CD4-positive, alpha-beta memory T cell (primary cell): ENCODE measurements at regions of chr7 and their contacts with region 1.

Region 1: DNA sequence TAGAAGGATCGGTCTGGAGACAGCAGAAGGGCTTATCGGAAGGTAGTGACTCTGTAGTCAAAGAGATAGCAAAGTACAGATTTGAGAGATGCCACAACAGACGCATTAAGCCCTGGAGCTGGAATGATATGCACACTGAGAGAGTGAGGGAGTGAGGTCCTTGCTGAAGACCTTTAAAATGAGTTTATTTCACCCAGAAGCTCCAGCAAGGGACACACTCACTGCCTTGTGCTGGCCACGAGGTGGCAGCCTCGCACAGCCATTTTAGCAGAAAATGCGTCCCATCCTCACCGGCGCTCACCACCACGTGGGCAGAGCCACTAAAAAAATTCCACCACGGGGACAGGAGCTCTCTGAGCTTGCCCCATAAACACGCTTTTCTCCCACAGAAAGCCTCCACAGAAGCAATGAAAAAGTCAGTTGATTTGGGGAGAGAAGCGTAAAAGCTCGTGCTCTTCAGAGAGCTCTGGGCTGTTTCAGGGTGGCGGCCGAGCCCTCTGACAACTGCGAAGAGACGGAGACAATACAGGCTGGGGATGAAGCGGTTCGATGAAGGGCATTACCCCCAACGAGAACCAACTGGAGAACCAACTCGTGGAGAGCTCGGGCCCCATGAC is 163.0 kb upstream of the KLF14 start:
- DNase-seq: peak; percentile 71 to 80 (median 75)
- H3K4me3 ChIP-seq: no peak overlapping the region
- H3K4me3 Mint-ChIP-seq: peak overlapping the region in 7 of 8 donors; percentile 2 to 72 (median 35)
- H3K27ac ChIP-seq: peak overlapping the region; percentile 18
- H3K27ac Mint-ChIP-seq: peak overlapping the region; percentile 88 to 95 (median 94)
- H3K4me1 ChIP-seq: peaks cover 87% of the 10 kb centered on the region
- H3K4me1 Mint-ChIP-seq: peaks cover 64 to 97% (median 82%) of the 10 kb centered on the region in 4 donors
- H3K27me3 ChIP-seq: no peaks in the 10 kb centered on the region
- H3K27me3 Mint-ChIP-seq: no peaks in the 10 kb centered on the region

Region 2: GRCh38 chr7:130793855-130794618 is 103.0 kb before region 1 on chr7:
- CTCF ChIA-PET with region 1: no interaction called
- POLR2A ChIA-PET with region 1: no interaction called
- intact Hi-C with region 1: no loop called
- DNase-seq: no peak
- H3K4me3 ChIP-seq: no peak overlapping the region
- H3K4me3 Mint-ChIP-seq: no peak overlapping the region
- H3K27ac ChIP-seq: no peak overlapping the region
- H3K27ac Mint-ChIP-seq: peak overlapping the region in 1 of 7 donors; percentile 15
- H3K4me1 ChIP-seq: no peaks in the 10 kb centered on the region
- H3K4me1 Mint-ChIP-seq: no peaks in the 10 kb centered on the region
- H3K27me3 ChIP-seq: no peaks in the 10 kb centered on the region
- H3K27me3 Mint-ChIP-seq: peaks cover 4 to 8% of the 10 kb centered on the region in 2 donors

Region 3: DNA sequence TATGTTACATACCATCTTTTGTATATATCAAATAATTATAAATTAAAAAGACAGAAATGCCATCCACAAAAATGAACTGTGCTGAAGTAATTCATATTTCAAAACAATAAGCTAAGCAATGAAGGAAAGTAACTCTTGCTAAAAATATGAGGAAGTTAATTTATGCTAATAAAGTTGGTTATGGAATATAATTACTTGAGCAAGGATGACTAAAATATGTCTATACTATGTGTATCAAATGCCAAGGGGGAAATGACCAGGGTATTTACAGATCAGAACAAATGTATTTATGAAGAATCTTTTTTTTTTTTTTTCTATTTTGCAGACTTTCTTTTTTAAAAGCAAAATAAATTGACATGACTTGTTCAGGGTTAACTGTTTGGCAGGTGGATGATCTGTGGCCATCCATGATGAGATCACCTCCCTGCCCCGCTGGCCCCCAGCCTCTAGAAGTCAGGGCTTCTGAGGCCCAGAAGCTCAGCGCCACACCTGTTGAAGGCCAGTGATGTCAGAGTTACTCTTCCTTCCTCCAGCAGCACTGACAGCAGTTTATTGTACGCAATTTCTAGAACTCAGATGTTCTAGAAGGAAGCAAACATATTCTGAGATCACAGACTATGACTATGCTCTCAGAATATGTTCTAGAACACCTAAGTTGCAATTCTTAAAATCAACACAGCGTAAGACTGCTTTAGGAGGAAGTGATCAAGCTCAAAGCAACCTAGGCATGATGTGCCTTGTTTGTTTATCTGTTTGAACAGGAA is 33.1 kb after region 1 on chr7:
- CTCF ChIA-PET with region 1: interaction called, 23 read pairs
- POLR2A ChIA-PET with region 1: interaction called, 4 read pairs
- intact Hi-C with region 1: no loop called
- DNase-seq: peak; percentile 53 to 83 (median 72)
- H3K4me3 ChIP-seq: no peak overlapping the region
- H3K4me3 Mint-ChIP-seq: peak overlapping the region in 7 of 8 donors; percentile 5 to 73 (median 66)
- H3K27ac ChIP-seq: peak overlapping the region; percentile 45
- H3K27ac Mint-ChIP-seq: peak overlapping the region in 6 of 7 donors; percentile 64 to 96 (median 92)
- H3K4me1 ChIP-seq: peaks cover 100% of the 10 kb centered on the region
- H3K4me1 Mint-ChIP-seq: peaks cover 69 to 99% (median 84%) of the 10 kb centered on the region in 4 donors
- H3K27me3 ChIP-seq: no peaks in the 10 kb centered on the region
- H3K27me3 Mint-ChIP-seq: no peaks in the 10 kb centered on the region

Region 4: GRCh38 chr7:130966246-130967009 is 69.4 kb after region 1 on chr7:
- CTCF ChIA-PET with region 1: interaction called, 10 read pairs
- POLR2A ChIA-PET with region 1: interaction called, 6 read pairs
- intact Hi-C with region 1: loop called (anchors 2 kb)
- DNase-seq: no peak
- H3K4me3 ChIP-seq: no peak overlapping the region
- H3K4me3 Mint-ChIP-seq: peak overlapping the region in 1 of 8 donors; percentile 4
- H3K27ac ChIP-seq: no peak overlapping the region
- H3K27ac Mint-ChIP-seq: peak overlapping the region in 6 of 7 donors; percentile 31 to 94 (median 64)
- H3K4me1 ChIP-seq: peaks cover 73% of the 10 kb centered on the region
- H3K4me1 Mint-ChIP-seq: peaks cover 47 to 66% (median 56%) of the 10 kb centered on the region in 4 donors
- H3K27me3 ChIP-seq: no peaks in the 10 kb centered on the region
- H3K27me3 Mint-ChIP-seq: no peaks in the 10 kb centered on the region

Region 5: GRCh38 chr7:130996841-130997231 is 99.8 kb after region 1 on chr7:
- CTCF ChIA-PET with region 1: interaction called, 48 read pairs
- POLR2A ChIA-PET with region 1: interaction called, 3 read pairs
- intact Hi-C with region 1: no loop called
- DNase-seq: peak in 1 of 5 donors; percentile 62
- H3K4me3 ChIP-seq: no peak overlapping the region
- H3K4me3 Mint-ChIP-seq: peak overlapping the region; percentile 62 to 86 (median 80)
- H3K27ac ChIP-seq: peak overlapping the region; percentile 64
- H3K27ac Mint-ChIP-seq: peak overlapping the region in 6 of 7 donors; percentile 88 to 98 (median 93)
- H3K4me1 ChIP-seq: peaks cover 92% of the 10 kb centered on the region
- H3K4me1 Mint-ChIP-seq: peaks cover 64 to 96% (median 80%) of the 10 kb centered on the region in 4 donors
- H3K27me3 ChIP-seq: no peaks in the 10 kb centered on the region
- H3K27me3 Mint-ChIP-seq: no peaks in the 10 kb centered on the region

Region 6: GRCh38 chr7:131040467-131040932 is 143.5 kb after region 1 on chr7:
- CTCF ChIA-PET with region 1: interaction called, 150 read pairs
- POLR2A ChIA-PET with region 1: interaction called, 10 read pairs
- intact Hi-C with region 1: loop called (anchors 1 kb)
- DNase-seq: peak; percentile 61 to 69 (median 65)
- H3K4me3 ChIP-seq: no peak overlapping the region
- H3K4me3 Mint-ChIP-seq: peak overlapping the region in 6 of 8 donors; percentile 25 to 74 (median 42)
- H3K27ac ChIP-seq: peak overlapping the region; percentile 10
- H3K27ac Mint-ChIP-seq: peak overlapping the region; percentile 39 to 81 (median 77)
- H3K4me1 ChIP-seq: peaks cover 49% of the 10 kb centered on the region
- H3K4me1 Mint-ChIP-seq: peaks cover 49 to 77% (median 62%) of the 10 kb centered on the region in 4 donors
- H3K27me3 ChIP-seq: no peaks in the 10 kb centered on the region
- H3K27me3 Mint-ChIP-seq: no peaks in the 10 kb centered on the region

Region 7: GRCh38 chr7:131424219-131424822 is 527.3 kb after region 1 on chr7:
- CTCF ChIA-PET with region 1: interaction called, 7 read pairs
- POLR2A ChIA-PET with region 1: no interaction called
- intact Hi-C with region 1: loop called (anchors 5 kb)
- DNase-seq: peak; percentile 28 to 46 (median 34)
- H3K4me3 ChIP-seq: no peak overlapping the region
- H3K4me3 Mint-ChIP-seq: no peak overlapping the region
- H3K27ac ChIP-seq: no peak overlapping the region
- H3K27ac Mint-ChIP-seq: peak overlapping the region in 3 of 7 donors; percentile 9 to 47 (median 14)
- H3K4me1 ChIP-seq: no peaks in the 10 kb centered on the region
- H3K4me1 Mint-ChIP-seq: peaks cover 3 to 11% (median 6%) of the 10 kb centered on the region in 4 donors
- H3K27me3 ChIP-seq: no peaks in the 10 kb centered on the region
- H3K27me3 Mint-ChIP-seq: no peaks in the 10 kb centered on the region